Dorsolateral prefrontal cortex (tissue), 120 donors: ENCODE measurements at regions of chr6 and their contacts with region 1.

Region 1: DNA sequence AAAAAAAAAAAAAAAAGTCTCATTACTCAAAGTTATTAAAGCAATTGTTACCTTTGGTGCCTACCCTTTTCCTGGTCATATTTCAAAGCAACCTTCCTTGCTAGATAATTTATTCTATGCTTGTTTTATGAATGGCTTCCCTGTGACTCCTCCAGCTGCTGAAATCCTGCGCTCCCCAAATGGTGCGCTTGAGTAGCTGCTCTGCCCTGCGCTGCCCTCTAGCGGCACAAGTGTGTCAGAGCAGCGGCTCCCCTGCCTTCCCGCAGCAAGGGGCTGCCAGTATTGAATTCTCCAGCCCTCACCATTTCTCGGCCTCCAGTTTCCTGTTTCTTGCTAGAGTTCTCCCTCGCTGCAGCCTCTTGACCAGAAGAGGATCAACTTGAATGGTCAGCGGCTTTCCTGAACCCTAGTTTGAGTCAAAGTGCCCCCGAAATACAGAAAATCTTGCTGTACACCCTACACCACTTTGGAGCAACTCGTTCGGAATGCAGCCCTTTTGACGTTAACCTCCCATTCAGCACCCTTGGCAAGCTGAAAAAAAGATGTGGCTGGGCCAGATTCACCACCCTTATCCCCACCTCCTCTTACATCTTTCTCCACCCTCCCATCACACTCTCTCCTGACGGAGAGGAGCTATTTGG is 60.4 kb upstream of the KLHL31 start:
- DNase-seq: peak; percentile 64 to 87 (median 76)
- H3K4me3 ChIP-seq: no peak overlapping the region
- H3K27ac ChIP-seq: no peak overlapping the region
- H3K27me3 ChIP-seq: peaks cover 0 to 4% (median 0%) of the 10 kb centered on the region in 45 donors
- CTCF ChIP-seq: peak; percentile 69 to 98 (median 95)

Region 2: DNA sequence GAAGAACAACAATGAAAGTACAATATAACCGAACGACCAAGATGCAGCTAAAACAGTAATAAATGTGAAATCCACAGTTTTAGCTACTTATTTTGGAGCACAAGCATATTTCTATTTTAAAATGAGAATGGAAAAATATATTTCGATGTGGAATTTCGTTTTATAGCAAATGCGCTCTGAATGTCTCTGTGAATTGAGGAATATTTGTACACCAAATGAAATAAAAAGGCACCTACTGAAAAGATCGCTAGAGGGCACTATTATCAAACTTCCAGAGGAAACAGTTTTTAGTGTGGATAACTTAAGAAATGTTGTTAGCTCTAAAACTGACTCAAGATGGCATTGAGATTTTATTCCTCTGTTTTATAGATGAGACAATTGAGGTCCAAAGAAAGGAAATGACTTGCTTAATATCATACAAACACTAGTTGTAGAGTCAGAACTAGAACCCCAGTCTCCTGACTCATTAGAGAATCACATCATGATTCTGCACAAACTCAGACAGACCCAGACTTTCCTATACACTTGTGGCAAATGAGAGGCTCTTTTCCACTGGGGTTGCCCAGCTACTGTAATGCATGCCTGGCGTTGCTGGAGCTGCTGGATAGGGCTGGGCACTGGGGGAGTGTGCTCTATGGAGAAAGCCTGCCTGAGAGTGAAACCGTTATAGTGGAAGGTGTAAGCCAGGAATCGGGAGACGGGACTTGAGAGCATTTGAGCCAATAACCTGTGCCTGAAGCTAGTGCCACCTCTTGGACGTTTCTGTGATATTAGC is 232.9 kb before region 1 on chr6:
- intact Hi-C with region 1: loop called (anchors 2 to 5 kb)
- DNase-seq: no peak
- H3K4me3 ChIP-seq: peak overlapping the region in 54 of 59 donors; percentile 9 to 64 (median 42)
- H3K27ac ChIP-seq: peak overlapping the region in 18 of 59 donors; percentile 8 to 63 (median 31)
- H3K27me3 ChIP-seq: no peaks in the 10 kb centered on the region
- CTCF ChIP-seq: peak; percentile 61 to 95 (median 86)

Region 3: GRCh38 chr6:53544470-53545308 is 181.2 kb before region 1 on chr6 and contains the start of gene GCLC:
- intact Hi-C with region 1: loop called (anchors 5 to 10 kb)
- DNase-seq: peak; percentile 87 to 95 (median 91)
- H3K4me3 ChIP-seq: peak within 1 kb of the TSS; percentile 67 to 100 (median 94)
- H3K27ac ChIP-seq: peak within 1 kb of the TSS; percentile 66 to 99 (median 97)
- H3K27me3 ChIP-seq: no peaks in the 10 kb centered on the region
- CTCF ChIP-seq: peak in 55 of 56 donors; percentile 2 to 92 (median 71)
- total RNA-seq, gene GCLC: 28.3 to 113 (median 64.6) TPM

Region 4: DNA sequence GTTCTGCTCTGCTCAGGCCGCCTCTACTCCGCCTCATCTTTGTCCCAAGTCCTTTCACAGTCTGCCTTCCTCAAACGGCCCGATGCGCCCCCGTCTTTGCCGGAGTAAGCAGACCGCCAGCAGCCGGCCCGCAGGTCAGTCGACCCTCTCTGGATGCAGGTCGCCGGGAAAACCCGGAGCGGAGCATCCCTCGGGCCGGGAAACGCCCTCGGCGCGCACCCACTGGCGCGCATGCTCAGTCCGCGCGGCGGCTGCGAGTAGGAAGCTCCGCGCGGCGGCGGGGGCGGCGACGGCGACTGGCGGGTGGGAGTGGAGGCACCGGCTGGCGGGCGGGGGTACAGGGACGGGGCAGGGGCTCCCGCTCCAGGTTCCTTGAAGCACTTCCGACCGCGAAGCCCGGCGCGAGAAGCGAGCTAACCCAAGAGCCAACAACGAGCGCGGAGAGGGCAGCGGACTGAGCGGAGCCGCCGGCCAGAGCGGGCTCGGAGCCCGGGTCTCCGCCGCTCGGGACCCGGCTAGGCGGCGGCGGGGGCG is 68.9 kb after region 1 on chr6 and contains the start of gene LRRC1:
- intact Hi-C with region 1: loop called in 1 of 2 experiments (anchors 5 kb)
- DNase-seq: peak; percentile 80 to 94 (median 90)
- H3K4me3 ChIP-seq: peak within 1 kb of the TSS; percentile 57 to 99 (median 92)
- H3K27ac ChIP-seq: peak within 1 kb of the TSS; percentile 20 to 95 (median 89)
- H3K27me3 ChIP-seq: peaks cover 0 to 2% (median 0%) of the 10 kb centered on the region in 45 donors
- CTCF ChIP-seq: peak in 4 of 56 donors; percentile 0 to 28 (median 9)
- total RNA-seq, gene LRRC1: 5.4 to 73.2 (median 19.4) TPM